PC-3 (cell line): ENCODE measurements at regions of chr21 and their contacts with region 1.

Region 1: GRCh38 chr21:31744182-31744800 is 12.4 kb upstream of the SCAF4 start:
- DNase-seq: no peak
- ATAC-seq: no peak
- H3K4me3 ChIP-seq: no peak overlapping the region
- H3K27ac ChIP-seq: no peak overlapping the region
- H3K4me1 ChIP-seq: no peaks in the 10 kb centered on the region
- H3K27me3 ChIP-seq: no peaks in the 10 kb centered on the region
- CTCF ChIP-seq: no peak

Region 2: GRCh38 chr21:31696424-31696823 is 47.9 kb before region 1 on chr21:
- CTCF ChIA-PET with region 1: no interaction called
- POLR2A ChIA-PET with region 1: no interaction called
- intact Hi-C with region 1: no loop called
- DNase-seq: no peak
- ATAC-seq: no peak
- H3K4me3 ChIP-seq: no peak overlapping the region
- H3K27ac ChIP-seq: no peak overlapping the region
- H3K4me1 ChIP-seq: no peaks in the 10 kb centered on the region
- H3K27me3 ChIP-seq: no peaks in the 10 kb centered on the region
- CTCF ChIP-seq: no peak

Region 3: DNA sequence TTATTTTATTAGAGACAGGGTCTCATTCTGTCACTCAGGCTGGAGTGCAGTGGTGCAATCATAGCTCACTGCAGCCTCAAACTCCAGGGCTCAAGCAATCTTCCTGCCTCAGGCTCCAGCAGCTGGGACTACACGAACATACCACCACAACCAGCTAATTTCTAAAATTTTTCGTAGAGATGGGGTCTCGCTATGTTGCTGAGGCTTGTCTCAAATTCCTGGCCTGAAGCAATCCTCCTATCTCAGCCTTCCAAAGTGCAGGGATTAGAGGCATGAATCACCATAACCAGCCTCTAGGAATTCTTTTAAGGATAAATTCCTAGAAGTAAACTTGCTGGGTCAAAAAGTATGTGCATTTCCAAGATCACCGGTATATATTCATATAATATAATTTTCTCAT is 110.9 kb after region 1 on chr21:
- CTCF ChIA-PET with region 1: interaction called, 11 read pairs
- POLR2A ChIA-PET with region 1: no interaction called
- intact Hi-C with region 1: no loop called
- DNase-seq: no peak
- ATAC-seq: no peak
- H3K4me3 ChIP-seq: no peak overlapping the region
- H3K27ac ChIP-seq: no peak overlapping the region
- H3K4me1 ChIP-seq: no peaks in the 10 kb centered on the region
- H3K27me3 ChIP-seq: peaks cover 26% of the 10 kb centered on the region
- CTCF ChIP-seq: no peak